ENCODE measurements at regions of chr12 and their contacts with region 1.

Region 1: GRCh38 chr12:82627569-82628198 is 59.0 kb upstream of the TMTC2 start:
- DNase-seq: peak; percentile 38
- ATAC-seq: peak; percentile 89
- H3K4me3 ChIP-seq: no peak overlapping the region
- H3K27ac ChIP-seq: no peak overlapping the region
- H3K4me1 ChIP-seq: no peaks in the 10 kb centered on the region
- H3K27me3 ChIP-seq: no peaks in the 10 kb centered on the region
- CTCF ChIP-seq: peak; percentile 49
- POLR2A ChIP-seq: no peak
- RAD21 ChIP-seq: peak; percentile 45

Region 2: DNA sequence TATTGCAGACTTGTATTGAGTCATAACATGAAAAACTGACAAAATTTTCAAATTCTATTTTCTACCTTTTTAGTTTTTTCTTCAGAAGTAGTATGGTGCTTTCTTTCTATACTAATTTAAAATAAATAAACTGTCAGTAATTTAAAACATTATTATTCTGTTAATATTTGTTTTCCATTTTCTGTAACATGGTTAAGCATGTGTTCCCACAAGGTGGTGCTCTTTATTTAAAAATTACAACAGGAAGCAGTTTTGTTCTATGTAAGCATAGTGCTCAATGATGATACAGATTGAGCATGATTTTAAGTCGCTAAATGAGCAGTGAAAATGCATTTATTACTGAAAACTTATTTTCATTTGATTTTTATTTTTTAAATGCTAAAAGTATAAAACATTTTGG is 983.2 kb before region 1 on chr12:
- CTCF ChIA-PET with region 1: no interaction called
- POLR2A ChIA-PET with region 1: no interaction called
- dilution Hi-C with region 1: no loop called
- in situ Hi-C with region 1: no loop called
- intact Hi-C with region 1: loop called (anchors 1 kb)
- DNase-seq: peak; percentile 36
- ATAC-seq: peak; percentile 68
- H3K4me3 ChIP-seq: no peak overlapping the region
- H3K27ac ChIP-seq: no peak overlapping the region
- H3K4me1 ChIP-seq: no peaks in the 10 kb centered on the region
- H3K27me3 ChIP-seq: no peaks in the 10 kb centered on the region
- CTCF ChIP-seq: peak; percentile 56
- POLR2A ChIP-seq: no peak
- RAD21 ChIP-seq: peak; percentile 50

Region 3: DNA sequence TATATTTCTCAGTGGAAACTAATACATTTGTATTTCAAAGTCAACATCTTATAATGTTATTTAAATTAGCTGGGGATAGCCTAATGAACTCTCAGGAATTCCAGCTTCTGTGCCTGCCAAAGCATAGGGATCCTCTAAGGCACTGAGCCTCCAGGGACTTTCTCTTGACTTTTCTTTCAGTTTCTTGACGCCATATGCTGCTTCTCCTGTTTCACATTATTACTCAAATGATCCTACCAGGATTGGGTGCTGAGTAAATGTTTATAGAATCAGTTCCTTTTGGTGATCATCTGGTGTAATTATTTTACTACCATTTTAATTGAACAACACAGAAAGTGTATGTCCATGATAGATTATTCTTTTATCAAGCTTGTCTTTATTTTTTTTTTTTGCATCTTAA is 261.5 kb before region 1 on chr12:
- CTCF ChIA-PET with region 1: no interaction called
- POLR2A ChIA-PET with region 1: no interaction called
- dilution Hi-C with region 1: no loop called
- in situ Hi-C with region 1: no loop called
- intact Hi-C with region 1: no loop called
- DNase-seq: peak; percentile 47
- ATAC-seq: peak; percentile 70
- H3K4me3 ChIP-seq: no peak overlapping the region
- H3K27ac ChIP-seq: no peak overlapping the region; the same call in 1 of the 2 replicates
- H3K4me1 ChIP-seq: no peaks in the 10 kb centered on the region
- H3K27me3 ChIP-seq: no peaks in the 10 kb centered on the region
- CTCF ChIP-seq: no peak
- POLR2A ChIP-seq: no peak
- RAD21 ChIP-seq: no peak

Region 4: DNA sequence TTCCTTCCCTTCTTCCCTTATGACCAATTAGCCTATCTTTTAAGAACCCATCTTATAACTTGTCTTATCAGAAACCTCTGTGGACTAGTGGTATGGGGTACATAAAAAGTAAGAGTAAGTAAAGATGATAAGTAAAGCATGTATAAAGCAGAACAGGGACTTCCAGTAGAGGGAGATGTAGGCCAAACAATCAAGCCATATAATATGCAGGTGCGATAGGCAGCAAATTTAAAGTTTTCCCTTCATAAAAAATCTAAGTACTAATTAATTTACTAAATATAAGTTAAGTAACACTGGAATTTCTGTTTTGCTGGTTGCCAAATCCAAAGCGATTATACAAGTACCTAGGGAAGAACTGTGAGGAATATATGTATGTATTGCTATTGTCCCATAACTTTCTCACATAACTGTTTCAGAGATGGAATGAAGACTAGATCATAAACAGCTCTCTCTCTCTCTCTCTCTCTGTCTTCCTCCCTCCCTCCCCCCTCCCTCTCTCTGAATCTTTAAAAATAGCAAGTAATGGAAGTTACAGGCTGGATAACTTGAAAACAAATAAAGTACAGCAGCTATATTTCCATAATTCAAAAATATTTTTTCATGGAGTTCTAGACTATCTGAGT is 243.6 kb before region 1 on chr12:
- CTCF ChIA-PET with region 1: no interaction called
- POLR2A ChIA-PET with region 1: no interaction called
- dilution Hi-C with region 1: no loop called
- in situ Hi-C with region 1: no loop called
- intact Hi-C with region 1: loop called (anchors 1 kb)
- DNase-seq: peak; percentile 54
- ATAC-seq: peak; percentile 80
- H3K4me3 ChIP-seq: no peak overlapping the region
- H3K27ac ChIP-seq: no peak overlapping the region
- H3K4me1 ChIP-seq: no peaks in the 10 kb centered on the region
- H3K27me3 ChIP-seq: no peaks in the 10 kb centered on the region
- CTCF ChIP-seq: peak; percentile 62
- POLR2A ChIP-seq: no peak
- RAD21 ChIP-seq: peak; percentile 69

Region 5: GRCh38 chr12:82527165-82527780 is 100.4 kb before region 1 on chr12:
- CTCF ChIA-PET with region 1: no interaction called
- POLR2A ChIA-PET with region 1: no interaction called
- dilution Hi-C with region 1: no loop called
- in situ Hi-C with region 1: no loop called
- intact Hi-C with region 1: loop called (anchors 1 kb)
- DNase-seq: peak; percentile 64
- ATAC-seq: peak; percentile 76; the same call in 1 of the 2 replicates
- H3K4me3 ChIP-seq: no peak overlapping the region
- H3K27ac ChIP-seq: no peak overlapping the region
- H3K4me1 ChIP-seq: no peaks in the 10 kb centered on the region
- H3K27me3 ChIP-seq: no peaks in the 10 kb centered on the region
- CTCF ChIP-seq: peak; percentile 86
- POLR2A ChIP-seq: no peak
- RAD21 ChIP-seq: peak; percentile 65

Region 6: GRCh38 chr12:82608706-82609105 is 19.0 kb before region 1 on chr12:
- CTCF ChIA-PET with region 1: no interaction called
- POLR2A ChIA-PET with region 1: no interaction called
- dilution Hi-C with region 1: no loop called
- in situ Hi-C with region 1: no loop called
- intact Hi-C with region 1: no loop called
- DNase-seq: peak; percentile 2
- ATAC-seq: peak; percentile 54
- H3K4me3 ChIP-seq: no peak overlapping the region
- H3K27ac ChIP-seq: no peak overlapping the region
- H3K4me1 ChIP-seq: no peaks in the 10 kb centered on the region
- H3K27me3 ChIP-seq: no peaks in the 10 kb centered on the region
- CTCF ChIP-seq: no peak
- POLR2A ChIP-seq: no peak
- RAD21 ChIP-seq: no peak